ENCODE measurements at regions of chr10 and their contacts with region 1.

Region 1: DNA sequence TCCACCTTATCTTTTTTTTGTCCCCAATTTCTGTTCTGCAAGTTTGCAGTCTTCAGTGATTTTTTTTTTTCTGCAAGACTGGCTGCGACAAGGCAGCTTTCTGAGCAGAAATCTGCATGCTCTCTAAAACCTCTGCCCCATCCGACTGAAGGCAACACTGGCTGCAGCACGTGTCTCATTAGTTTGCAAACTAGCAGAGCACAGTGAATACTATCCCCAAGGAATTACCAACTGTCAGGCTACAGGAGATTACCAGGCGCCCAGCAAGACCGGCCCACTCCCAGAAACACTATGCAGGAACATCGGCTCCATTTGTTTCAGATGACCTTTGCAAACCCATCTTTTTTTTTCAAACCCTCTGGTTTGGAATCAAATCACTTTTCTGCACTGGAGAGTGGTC is 538.8 kb downstream of the SORCS1 start:
- DNase-seq: no peak
- ATAC-seq: no peak
- H3K4me3 ChIP-seq: no peak overlapping the region
- H3K27ac ChIP-seq: no peak overlapping the region
- H3K4me1 ChIP-seq: no peaks in the 10 kb centered on the region
- H3K27me3 ChIP-seq: peaks cover 2% of the 10 kb centered on the region; the same call in 1 of the 2 replicates
- CTCF ChIP-seq: no peak

Region 2: DNA sequence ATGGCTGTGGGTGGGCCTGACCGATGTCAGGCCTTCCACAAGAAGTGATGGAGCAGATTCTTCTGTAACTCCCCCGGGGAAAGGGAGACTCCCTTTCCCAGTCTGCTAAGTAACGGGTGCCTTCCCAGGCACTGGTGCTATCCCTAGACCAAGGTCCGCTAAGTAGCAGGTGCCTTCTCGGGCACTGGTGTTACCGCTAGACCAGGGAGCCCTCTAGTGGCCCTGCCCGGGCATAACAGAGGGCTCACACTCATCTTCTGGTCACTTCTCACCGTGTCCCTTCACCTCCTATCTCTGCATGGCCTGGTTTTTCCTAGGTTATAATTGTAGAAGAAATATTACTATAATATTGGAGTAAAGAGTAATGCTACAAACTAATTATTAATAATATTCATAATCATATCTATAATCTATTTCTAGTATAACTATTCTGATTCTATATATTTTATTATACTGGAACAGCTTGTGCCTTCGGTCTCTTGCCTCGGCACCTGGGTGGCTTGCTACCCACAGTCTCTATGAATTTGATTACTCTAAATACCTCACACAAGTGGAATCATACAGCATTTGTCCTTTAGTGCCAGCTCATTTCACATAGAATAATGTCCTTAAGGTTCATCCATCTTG is 1918.9 kb after region 1 on chr10:
- CTCF ChIA-PET with region 1: no interaction called
- POLR2A ChIA-PET with region 1: no interaction called
- in situ Hi-C with region 1: no loop called
- intact Hi-C with region 1: loop called (anchors 10 kb)
- DNase-seq: peak; percentile 50
- ATAC-seq: peak; percentile 96
- H3K4me3 ChIP-seq: no peak overlapping the region
- H3K27ac ChIP-seq: no peak overlapping the region
- H3K4me1 ChIP-seq: no peaks in the 10 kb centered on the region
- H3K27me3 ChIP-seq: no peaks in the 10 kb centered on the region
- CTCF ChIP-seq: peak; percentile 96

Measured in Panc1 (cell line).